CD8-positive, alpha-beta T cell (primary cell): ENCODE measurements at regions of chr6 and their contacts with region 1.

Region 1: DNA sequence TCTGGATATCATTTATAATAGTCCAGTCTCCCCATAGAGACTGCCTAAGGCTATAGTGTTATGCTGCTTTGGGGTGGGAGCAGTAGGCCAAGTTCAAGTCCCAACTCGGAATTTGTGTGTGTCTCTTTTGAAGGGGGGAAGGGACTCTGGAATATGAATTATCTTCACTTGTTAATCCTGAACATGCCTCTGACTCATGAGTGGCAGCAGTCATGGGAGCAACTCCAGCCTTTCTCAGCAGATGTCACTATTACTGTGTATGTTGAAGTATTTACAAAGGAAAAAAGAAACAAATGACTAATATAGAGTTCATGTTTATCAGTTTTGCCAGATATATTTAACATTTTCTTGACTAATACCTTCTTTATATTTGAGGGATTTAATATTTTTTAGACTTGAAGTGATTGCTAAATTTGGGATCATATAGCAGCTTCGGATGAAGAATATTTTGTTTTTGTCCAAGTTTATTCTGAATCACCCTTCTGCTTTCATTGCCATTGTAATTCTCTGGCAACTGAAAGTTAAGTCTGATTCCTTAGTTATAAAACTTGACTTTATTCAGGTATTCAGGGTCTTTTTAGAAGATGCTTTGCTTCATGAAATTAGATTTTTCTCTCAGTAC is 23.4 kb downstream of the FAM217A start:
- DNase-seq: peak in 3 of 9 experiments; percentile 24 to 28 (median 26)
- ATAC-seq: no peak
- H3K4me3 ChIP-seq: no peak overlapping the region
- H3K4me3 Mint-ChIP-seq: no peak overlapping the region
- H3K27ac ChIP-seq: no peak overlapping the region
- H3K27ac Mint-ChIP-seq: peak overlapping the region; percentile 2
- H3K4me1 ChIP-seq: peaks cover 13% of the 10 kb centered on the region
- H3K4me1 Mint-ChIP-seq: peaks cover 19% of the 10 kb centered on the region
- H3K27me3 ChIP-seq: no peaks in the 10 kb centered on the region
- H3K27me3 Mint-ChIP-seq: no peaks in the 10 kb centered on the region
- CTCF ChIP-seq: no peak

Region 2: GRCh38 chr6:3848925-3849605 is 206.5 kb before region 1 on chr6 and contains the start of gene FAM50B:
- CTCF ChIA-PET with region 1: no interaction called
- POLR2A ChIA-PET with region 1: no interaction called
- intact Hi-C with region 1: no loop called
- DNase-seq: peak; percentile 81 to 94 (median 90)
- ATAC-seq: peak; percentile 95
- H3K4me3 ChIP-seq: peak within 1 kb of the TSS; percentile 54 to 63
- H3K4me3 Mint-ChIP-seq: peak within 1 kb of the TSS; percentile 80
- H3K27ac ChIP-seq: peak within 1 kb of the TSS; percentile 47 to 56
- H3K27ac Mint-ChIP-seq: peak within 1 kb of the TSS; percentile 84
- H3K4me1 ChIP-seq: peaks cover 6% of the 10 kb centered on the region
- H3K4me1 Mint-ChIP-seq: peaks cover 18% of the 10 kb centered on the region
- H3K27me3 ChIP-seq: no peaks in the 10 kb centered on the region
- H3K27me3 Mint-ChIP-seq: no peaks in the 10 kb centered on the region
- CTCF ChIP-seq: peak; percentile 75
- total RNA-seq, gene FAM50B: 0.97 to 1.1 TPM

Region 3: GRCh38 chr6:3987053-3987452 is 68.5 kb before region 1 on chr6:
- CTCF ChIA-PET with region 1: no interaction called
- POLR2A ChIA-PET with region 1: no interaction called
- intact Hi-C with region 1: no loop called
- DNase-seq: no peak
- ATAC-seq: no peak
- H3K4me3 ChIP-seq: no peak overlapping the region
- H3K4me3 Mint-ChIP-seq: no peak overlapping the region
- H3K27ac ChIP-seq: no peak overlapping the region
- H3K27ac Mint-ChIP-seq: no peak overlapping the region
- H3K4me1 ChIP-seq: no peaks in the 10 kb centered on the region
- H3K4me1 Mint-ChIP-seq: peaks cover 18% of the 10 kb centered on the region
- H3K27me3 ChIP-seq: no peaks in the 10 kb centered on the region
- H3K27me3 Mint-ChIP-seq: no peaks in the 10 kb centered on the region
- CTCF ChIP-seq: no peak

Region 4: DNA sequence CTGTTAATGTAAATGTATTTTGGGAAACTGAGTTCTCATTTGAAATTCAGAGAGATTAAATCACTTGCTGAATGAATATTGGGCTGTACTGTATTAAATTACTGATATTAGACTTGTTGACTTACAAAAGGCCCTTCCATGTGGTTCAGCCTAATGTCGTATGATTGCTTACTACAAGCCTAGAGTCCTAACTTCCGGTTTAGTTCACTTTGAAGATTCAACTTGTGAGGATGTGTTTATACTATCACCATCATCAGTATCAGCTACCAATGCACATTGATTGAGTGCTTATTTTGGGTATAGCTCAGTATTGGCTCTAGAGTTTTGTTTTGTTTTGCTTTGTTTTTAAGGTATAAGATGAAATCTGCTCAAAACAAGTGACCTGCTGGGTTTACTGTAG is 24.9 kb before region 1 on chr6:
- CTCF ChIA-PET with region 1: no interaction called
- POLR2A ChIA-PET with region 1: interaction called, 4 read pairs
- intact Hi-C with region 1: loop called in 1 of 2 experiments (anchors 1 kb)
- DNase-seq: peak in 1 of 9 experiments; percentile 55
- ATAC-seq: peak; percentile 62
- H3K4me3 ChIP-seq: no peak overlapping the region
- H3K4me3 Mint-ChIP-seq: peak overlapping the region; percentile 6
- H3K27ac ChIP-seq: no peak overlapping the region
- H3K27ac Mint-ChIP-seq: peak overlapping the region; percentile 55
- H3K4me1 ChIP-seq: peaks cover 42% of the 10 kb centered on the region
- H3K4me1 Mint-ChIP-seq: peaks cover 70% of the 10 kb centered on the region
- H3K27me3 ChIP-seq: no peaks in the 10 kb centered on the region
- H3K27me3 Mint-ChIP-seq: no peaks in the 10 kb centered on the region
- CTCF ChIP-seq: no peak

Region 5: DNA sequence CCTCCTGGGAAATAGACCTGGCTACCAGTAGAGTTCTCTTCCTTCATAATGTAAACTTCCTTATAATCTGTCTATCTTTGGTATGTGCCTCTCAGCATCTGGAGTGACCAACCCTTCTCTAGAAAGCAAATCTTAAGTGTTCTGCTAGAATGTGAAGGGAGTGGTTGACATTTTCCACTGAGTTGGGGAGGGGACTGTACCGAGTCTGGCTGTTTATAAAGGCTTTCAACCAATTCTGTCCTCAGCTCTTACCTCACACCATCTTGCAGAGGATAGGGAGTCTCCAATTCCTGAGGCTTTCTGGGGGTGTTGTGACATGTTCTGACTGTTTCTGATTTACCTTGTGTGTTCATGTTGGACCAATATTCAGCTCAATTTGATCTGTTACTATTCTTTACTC is 16.2 kb before region 1 on chr6:
- CTCF ChIA-PET with region 1: interaction called, 3 read pairs
- POLR2A ChIA-PET with region 1: no interaction called
- intact Hi-C with region 1: loop called in 1 of 2 experiments (anchors 2 kb)
- DNase-seq: no peak
- ATAC-seq: no peak
- H3K4me3 ChIP-seq: no peak overlapping the region
- H3K4me3 Mint-ChIP-seq: no peak overlapping the region
- H3K27ac ChIP-seq: no peak overlapping the region
- H3K27ac Mint-ChIP-seq: no peak overlapping the region
- H3K4me1 ChIP-seq: peaks cover 3% of the 10 kb centered on the region
- H3K4me1 Mint-ChIP-seq: peaks cover 32% of the 10 kb centered on the region
- H3K27me3 ChIP-seq: no peaks in the 10 kb centered on the region
- H3K27me3 Mint-ChIP-seq: no peaks in the 10 kb centered on the region
- CTCF ChIP-seq: no peak